Gastrocnemius medialis (tissue), 4 donors: ENCODE measurements at regions of chr7 and their contacts with region 1.

Region 1: DNA sequence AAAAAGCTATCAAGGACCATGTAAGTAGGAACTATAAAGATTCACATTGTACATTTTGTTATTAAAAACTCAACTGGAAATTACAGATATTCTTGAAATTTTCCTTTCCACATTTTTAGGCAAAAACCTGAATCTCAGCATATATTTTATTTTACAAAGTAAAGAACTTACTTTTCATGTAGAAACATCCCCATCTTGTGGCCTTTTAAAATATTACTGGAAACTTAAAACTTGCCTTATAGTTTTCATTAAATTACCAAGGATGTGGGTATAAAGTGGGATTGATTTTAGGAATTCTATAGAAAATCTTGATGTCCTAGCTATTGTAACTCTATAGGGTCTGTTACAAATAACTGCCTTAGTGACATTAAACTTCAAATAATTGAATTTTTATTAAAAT is 10.6 kb downstream of the DBF4 start:
- DNase-seq: no peak
- ATAC-seq: no peak
- H3K4me3 ChIP-seq: no peak overlapping the region
- H3K27ac ChIP-seq: no peak overlapping the region
- H3K4me1 ChIP-seq: no peaks in the 10 kb centered on the region
- H3K27me3 ChIP-seq: no peaks in the 10 kb centered on the region
- CTCF ChIP-seq: peak in 2 of 5 experiments; percentile 42
- POLR2A ChIP-seq: no peak

Region 2: DNA sequence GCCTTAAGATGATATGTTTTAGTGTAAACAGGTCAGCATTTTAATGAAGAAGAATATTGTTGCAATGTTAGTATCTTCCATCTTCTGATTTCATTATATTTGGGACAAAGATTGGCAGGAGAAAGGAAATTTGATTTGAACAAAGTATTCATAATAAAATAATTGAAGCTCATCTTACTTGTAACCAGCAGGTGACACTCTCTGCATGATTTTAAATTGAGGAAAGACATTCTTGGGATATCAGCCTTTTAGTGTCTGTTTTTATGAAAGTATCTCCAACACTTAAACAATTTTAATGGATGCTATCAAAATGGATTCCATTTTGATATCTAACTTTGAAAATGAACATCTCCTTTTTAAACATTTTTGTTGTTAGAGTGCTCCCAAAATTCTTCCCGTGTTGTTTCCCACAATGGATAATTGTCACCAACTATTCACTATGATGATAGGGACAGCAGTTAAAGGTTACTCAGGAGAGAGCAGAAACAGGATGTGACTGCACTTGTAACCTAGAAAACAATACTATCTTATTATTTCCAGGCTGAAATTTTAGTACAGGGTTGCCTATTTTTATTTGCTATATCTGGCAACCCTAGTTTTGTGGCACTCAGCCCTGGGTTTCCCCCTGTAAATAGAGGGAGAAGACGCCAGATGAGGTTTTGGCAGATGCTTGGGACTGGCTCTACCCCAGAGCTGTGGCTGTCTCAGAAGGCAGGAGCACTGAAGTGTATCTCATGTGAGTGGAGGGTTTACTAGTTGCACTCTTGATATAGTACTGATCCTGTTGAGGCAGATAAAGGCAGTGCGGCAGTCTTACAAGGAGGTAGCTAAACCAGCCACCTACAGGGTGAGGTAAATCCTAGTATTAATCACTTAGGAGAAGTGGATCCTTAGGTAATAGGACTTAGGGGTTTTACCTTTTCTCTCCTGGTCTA is 380.4 kb before region 1 on chr7:
- in situ Hi-C with region 1: loop called in 1 of 4 experiments (anchors 10 kb)
- intact Hi-C with region 1: no loop called
- DNase-seq: no peak
- ATAC-seq: no peak
- H3K4me3 ChIP-seq: no peak overlapping the region
- H3K27ac ChIP-seq: no peak overlapping the region
- H3K4me1 ChIP-seq: peaks cover 0 to 3% of the 10 kb centered on the region in 2 donors
- H3K27me3 ChIP-seq: no peaks in the 10 kb centered on the region
- CTCF ChIP-seq: peak in 3 of 5 experiments; percentile 21 to 42 (median 35)
- POLR2A ChIP-seq: no peak

Region 3: GRCh38 chr7:87779806-87780205 is 107.1 kb before region 1 on chr7:
- in situ Hi-C with region 1: no loop called
- intact Hi-C with region 1: no loop called
- DNase-seq: no peak
- ATAC-seq: no peak
- H3K4me3 ChIP-seq: no peak overlapping the region
- H3K27ac ChIP-seq: no peak overlapping the region
- H3K4me1 ChIP-seq: no peaks in the 10 kb centered on the region
- H3K27me3 ChIP-seq: no peaks in the 10 kb centered on the region
- CTCF ChIP-seq: no peak
- POLR2A ChIP-seq: no peak

Region 4: GRCh38 chr7:87797798-87798403 is 89.0 kb before region 1 on chr7:
- in situ Hi-C with region 1: no loop called
- intact Hi-C with region 1: loop called (anchors 5 kb)
- DNase-seq: no peak
- ATAC-seq: no peak
- H3K4me3 ChIP-seq: no peak overlapping the region
- H3K27ac ChIP-seq: no peak overlapping the region
- H3K4me1 ChIP-seq: no peaks in the 10 kb centered on the region
- H3K27me3 ChIP-seq: no peaks in the 10 kb centered on the region
- CTCF ChIP-seq: peak in 3 of 5 experiments; percentile 20 to 48 (median 40)
- POLR2A ChIP-seq: no peak